Right cardiac atrium (tissue), 5 donors: ENCODE measurements at regions of chr12 and their contacts with region 1.

Region 1: DNA sequence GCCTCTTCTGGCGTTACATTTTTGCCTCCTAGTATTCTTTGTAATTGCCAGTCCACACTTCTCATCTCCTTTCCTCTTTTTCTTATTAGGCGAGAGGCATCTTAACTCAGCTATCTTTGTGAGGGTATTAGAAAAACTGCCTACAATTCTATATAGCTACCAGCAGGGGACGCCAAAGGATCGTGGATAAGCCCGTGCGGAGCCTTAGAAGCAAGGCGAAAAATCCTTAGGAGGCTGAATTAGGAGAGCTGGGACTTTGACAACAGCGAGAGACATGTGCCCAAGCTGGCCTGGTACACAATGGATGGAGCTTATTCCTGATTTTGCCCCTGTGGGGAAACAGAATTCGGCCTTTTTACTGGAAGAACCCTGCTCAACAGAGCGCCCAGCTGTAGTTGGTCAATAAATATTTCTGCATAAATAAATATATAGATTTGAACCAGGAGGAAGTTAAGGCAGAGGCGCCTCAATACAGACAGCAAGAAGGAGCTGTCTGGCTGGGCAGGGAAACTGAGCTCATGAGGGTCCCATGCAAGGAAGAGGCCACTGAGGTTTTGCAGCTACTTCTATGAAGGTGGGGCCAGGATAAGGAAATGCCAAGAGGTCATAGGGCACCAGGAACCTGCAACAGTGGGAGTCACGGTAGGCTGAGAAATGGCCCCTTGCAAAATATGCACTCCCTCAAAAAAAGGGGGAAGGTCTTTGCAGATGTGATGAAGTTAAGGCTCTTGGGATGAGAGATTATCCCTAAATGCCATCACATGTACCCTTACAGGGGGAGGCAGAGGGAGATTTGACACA is 14.6 kb upstream of the RBM19 start:
- DNase-seq: peak in 1 of 3 donors; percentile 20
- ATAC-seq: peak in 1 of 2 donors; percentile 60
- H3K4me3 ChIP-seq: no peak overlapping the region
- H3K27ac ChIP-seq: no peak overlapping the region
- H3K4me1 ChIP-seq: no peaks in the 10 kb centered on the region
- H3K27me3 ChIP-seq: no peaks in the 10 kb centered on the region

Region 2: GRCh38 chr12:113926788-113927187 is 53.9 kb before region 1 on chr12:
- intact Hi-C with region 1: no loop called
- DNase-seq: no peak
- ATAC-seq: no peak
- H3K4me3 ChIP-seq: no peak overlapping the region
- H3K27ac ChIP-seq: no peak overlapping the region
- H3K4me1 ChIP-seq: peaks cover 1% of the 10 kb centered on the region
- H3K27me3 ChIP-seq: no peaks in the 10 kb centered on the region

Region 3: GRCh38 chr12:114508529-114509129 is 527.9 kb after region 1 on chr12:
- intact Hi-C with region 1: loop called (anchors 5 to 10 kb)
- DNase-seq: peak; percentile 66 to 88 (median 67)
- ATAC-seq: peak; percentile 78 to 84
- H3K4me3 ChIP-seq: no peak overlapping the region
- H3K27ac ChIP-seq: no peak overlapping the region
- H3K4me1 ChIP-seq: no peaks in the 10 kb centered on the region
- H3K27me3 ChIP-seq: no peaks in the 10 kb centered on the region

Region 4: GRCh38 chr12:114636723-114637483 is 656.2 kb after region 1 on chr12:
- intact Hi-C with region 1: loop called in 2 of 4 experiments (anchors 5 to 10 kb)
- DNase-seq: no peak
- ATAC-seq: no peak
- H3K4me3 ChIP-seq: no peak overlapping the region
- H3K27ac ChIP-seq: no peak overlapping the region
- H3K4me1 ChIP-seq: no peaks in the 10 kb centered on the region
- H3K27me3 ChIP-seq: no peaks in the 10 kb centered on the region